ENCODE measurements at regions of chr17 and their contacts with region 1.

Region 1: DNA sequence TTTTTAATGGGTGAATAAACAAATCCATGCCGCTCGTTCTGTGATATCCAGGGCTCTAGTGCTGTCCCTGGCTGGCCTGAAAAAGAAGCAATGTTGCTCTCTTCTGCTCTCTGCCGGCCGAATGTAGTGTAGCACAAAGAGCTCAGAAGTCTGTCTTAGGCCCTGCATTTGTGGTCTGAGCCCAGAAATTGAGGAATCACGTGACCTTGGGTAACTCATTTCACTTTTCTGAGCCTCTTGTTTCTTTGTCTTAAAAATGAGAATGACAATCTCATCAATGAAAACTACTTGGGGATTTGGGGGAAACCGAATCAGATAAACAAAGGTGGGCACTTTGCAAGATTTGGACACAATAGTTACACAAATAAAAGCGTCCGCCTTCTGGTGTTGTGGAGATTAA is 381.6 kb upstream of the ASIC2 start:
- DNase-seq: peak; percentile 61 to 64
- ATAC-seq: peak; percentile 96 to 99
- H3K4me3 ChIP-seq: no peak overlapping the region
- H3K27ac ChIP-seq: no peak overlapping the region
- H3K4me1 ChIP-seq: no peaks in the 10 kb centered on the region
- CTCF ChIP-seq: peak; percentile 70
- EP300 ChIP-seq: no peak
- POLR2A ChIP-seq: no peak
- RAD21 ChIP-seq: peak; percentile 63 to 69

Region 2: GRCh38 chr17:33647956-33648355 is 26.7 kb before region 1 on chr17:
- CTCF ChIA-PET with region 1: interaction called, 16 read pairs
- POLR2A ChIA-PET with region 1: no interaction called
- DNase-seq: peak; percentile 20 to 44
- ATAC-seq: peak; percentile 84 to 85
- H3K4me3 ChIP-seq: no peak overlapping the region
- H3K27ac ChIP-seq: no peak overlapping the region
- H3K4me1 ChIP-seq: no peaks in the 10 kb centered on the region
- CTCF ChIP-seq: peak; percentile 50
- EP300 ChIP-seq: no peak
- POLR2A ChIP-seq: no peak
- RAD21 ChIP-seq: peak in 1 of 2 experiments; percentile 52; a peak in 3 of 5 replicates

Region 3: GRCh38 chr17:33661975-33662374 is 12.7 kb before region 1 on chr17:
- CTCF ChIA-PET with region 1: interaction called, 11 read pairs
- POLR2A ChIA-PET with region 1: no interaction called
- DNase-seq: no peak
- ATAC-seq: no peak
- H3K4me3 ChIP-seq: no peak overlapping the region
- H3K27ac ChIP-seq: no peak overlapping the region
- H3K4me1 ChIP-seq: no peaks in the 10 kb centered on the region
- CTCF ChIP-seq: no peak
- EP300 ChIP-seq: no peak
- POLR2A ChIP-seq: no peak
- RAD21 ChIP-seq: no peak

Region 4: GRCh38 chr17:33686171-33686570 is 11.5 kb after region 1 on chr17:
- CTCF ChIA-PET with region 1: interaction called, 51 read pairs
- POLR2A ChIA-PET with region 1: no interaction called
- DNase-seq: peak; percentile 28 to 29
- ATAC-seq: peak in 1 of 2 experiments; percentile 69; a peak in 3 of 6 replicates
- H3K4me3 ChIP-seq: no peak overlapping the region
- H3K27ac ChIP-seq: no peak overlapping the region
- H3K4me1 ChIP-seq: no peaks in the 10 kb centered on the region
- CTCF ChIP-seq: no peak
- EP300 ChIP-seq: no peak
- POLR2A ChIP-seq: no peak
- RAD21 ChIP-seq: no peak

Region 5: DNA sequence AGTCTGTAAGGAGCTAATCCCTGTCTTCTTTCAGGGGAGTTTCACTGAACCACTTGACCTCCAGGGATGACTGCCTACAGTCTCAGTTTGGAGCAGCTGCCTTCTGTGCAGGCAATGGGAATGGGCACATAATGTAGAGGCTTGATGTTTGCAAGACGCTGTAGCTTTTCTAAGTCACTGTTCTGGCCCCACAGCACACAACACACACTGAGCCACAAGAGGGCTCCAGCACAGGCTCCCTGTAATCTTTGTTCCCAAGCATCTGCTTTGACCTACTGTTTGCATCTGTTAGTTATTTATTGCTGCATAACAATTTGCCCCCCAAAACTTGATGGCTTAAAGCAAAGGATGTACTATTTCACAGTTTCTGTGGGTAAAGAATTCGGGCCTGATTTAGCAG is 37.4 kb after region 1 on chr17:
- CTCF ChIA-PET with region 1: no interaction called
- POLR2A ChIA-PET with region 1: no interaction called
- DNase-seq: no peak
- ATAC-seq: peak in 1 of 2 experiments; percentile 48; a peak in 2 of 6 replicates
- H3K4me3 ChIP-seq: no peak overlapping the region
- H3K27ac ChIP-seq: no peak overlapping the region
- H3K4me1 ChIP-seq: no peaks in the 10 kb centered on the region
- CTCF ChIP-seq: no peak
- EP300 ChIP-seq: no peak
- POLR2A ChIP-seq: no peak
- RAD21 ChIP-seq: no peak

Measured in A549 (cell line).